Panc1 (cell line): ENCODE measurements at regions of chr17 and their contacts with region 1.

Region 1: GRCh38 chr17:50707289-50708049 is at the start of gene ANKRD40:
- DNase-seq: no peak
- ATAC-seq: peak; percentile 90
- H3K4me3 ChIP-seq: peak within 1 kb of the TSS; percentile 64 to 92
- H3K27ac ChIP-seq: peak within 1 kb of the TSS; percentile 95
- H3K4me1 ChIP-seq: peaks cover 14% of the 10 kb centered on the region
- H3K27me3 ChIP-seq: no peaks in the 10 kb centered on the region
- CTCF ChIP-seq: no peak
- total RNA-seq, gene ANKRD40: 57.2 TPM

Region 2: GRCh38 chr17:50397111-50397918 is 310.2 kb before region 1 on chr17 and contains the start of gene LRRC59:
- CTCF ChIA-PET with region 1: interaction called, 13 read pairs
- POLR2A ChIA-PET with region 1: no interaction called
- in situ Hi-C with region 1: no loop called
- intact Hi-C with region 1: no loop called
- DNase-seq: peak; percentile 57
- ATAC-seq: peak; percentile 96
- H3K4me3 ChIP-seq: peak within 1 kb of the TSS; percentile 87 to 100
- H3K27ac ChIP-seq: peak within 1 kb of the TSS; percentile 95
- H3K4me1 ChIP-seq: peaks cover 14% of the 10 kb centered on the region; the same call in 1 of the 2 replicates
- H3K27me3 ChIP-seq: no peaks in the 10 kb centered on the region
- CTCF ChIP-seq: peak; percentile 99
- total RNA-seq, gene LRRC59: 167 TPM

Region 3: GRCh38 chr17:50638851-50639767 is 68.4 kb before region 1 on chr17:
- CTCF ChIA-PET with region 1: interaction called, 10 read pairs
- POLR2A ChIA-PET with region 1: interaction called, 3 read pairs
- in situ Hi-C with region 1: no loop called
- intact Hi-C with region 1: no loop called
- DNase-seq: peak; percentile 96
- ATAC-seq: peak; percentile 81
- H3K4me3 ChIP-seq: peak overlapping the region in 1 of 2 experiments; percentile 32; a peak in 2 of 4 replicates
- H3K27ac ChIP-seq: peak overlapping the region; percentile 100
- H3K4me1 ChIP-seq: peaks cover 88% of the 10 kb centered on the region
- H3K27me3 ChIP-seq: no peaks in the 10 kb centered on the region
- CTCF ChIP-seq: no peak

Region 4: DNA sequence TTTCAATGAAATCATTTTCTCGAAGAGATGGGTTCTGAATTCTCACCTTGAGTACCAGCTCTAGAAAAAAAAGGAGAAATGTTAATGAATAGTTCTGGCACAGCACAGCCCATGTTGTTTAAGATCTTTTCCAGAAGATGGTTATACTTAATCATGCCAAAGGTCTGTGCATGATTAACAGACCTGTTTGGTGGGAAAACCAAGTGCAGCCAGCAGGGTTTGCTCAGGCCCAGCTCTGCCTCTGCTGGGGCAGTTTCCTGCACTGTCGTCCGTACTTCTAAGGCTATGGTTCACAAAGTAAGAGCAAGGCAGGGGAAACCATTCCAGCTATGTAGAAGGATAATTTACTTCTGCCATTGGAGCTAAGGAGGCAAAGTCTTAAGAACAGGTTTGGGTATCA is 10.4 kb before region 1 on chr17:
- CTCF ChIA-PET with region 1: interaction called, 4 read pairs
- POLR2A ChIA-PET with region 1: interaction called, 12 read pairs
- in situ Hi-C with region 1: no loop called
- intact Hi-C with region 1: no loop called
- DNase-seq: no peak
- ATAC-seq: no peak
- H3K4me3 ChIP-seq: no peak overlapping the region
- H3K27ac ChIP-seq: 0 out of 2 replicates have a peak overlapping the region, but pooled peaks have one; percentile 14
- H3K4me1 ChIP-seq: peaks cover 34% of the 10 kb centered on the region
- H3K27me3 ChIP-seq: no peaks in the 10 kb centered on the region
- CTCF ChIP-seq: no peak

Region 5: GRCh38 chr17:50949989-50950881 is 242.8 kb after region 1 on chr17:
- CTCF ChIA-PET with region 1: interaction called, 9 read pairs
- POLR2A ChIA-PET with region 1: interaction called, 12 read pairs
- in situ Hi-C with region 1: no loop called
- intact Hi-C with region 1: no loop called
- DNase-seq: peak; percentile 67
- ATAC-seq: peak; percentile 86
- H3K4me3 ChIP-seq: peak overlapping the region in 1 of 2 experiments; percentile 15; a peak in 1 of 4 replicates
- H3K27ac ChIP-seq: peak overlapping the region; percentile 87
- H3K4me1 ChIP-seq: peaks cover 63% of the 10 kb centered on the region
- H3K27me3 ChIP-seq: no peaks in the 10 kb centered on the region
- CTCF ChIP-seq: peak; percentile 96